Posterior vena cava (tissue), 2 donors: ENCODE measurements at regions of chr2 and their contacts with region 1.

Region 1: GRCh38 chr2:63698825-63699548 is 110.2 kb downstream of the MDH1 start:
- DNase-seq: peak; percentile 91

Region 2: DNA sequence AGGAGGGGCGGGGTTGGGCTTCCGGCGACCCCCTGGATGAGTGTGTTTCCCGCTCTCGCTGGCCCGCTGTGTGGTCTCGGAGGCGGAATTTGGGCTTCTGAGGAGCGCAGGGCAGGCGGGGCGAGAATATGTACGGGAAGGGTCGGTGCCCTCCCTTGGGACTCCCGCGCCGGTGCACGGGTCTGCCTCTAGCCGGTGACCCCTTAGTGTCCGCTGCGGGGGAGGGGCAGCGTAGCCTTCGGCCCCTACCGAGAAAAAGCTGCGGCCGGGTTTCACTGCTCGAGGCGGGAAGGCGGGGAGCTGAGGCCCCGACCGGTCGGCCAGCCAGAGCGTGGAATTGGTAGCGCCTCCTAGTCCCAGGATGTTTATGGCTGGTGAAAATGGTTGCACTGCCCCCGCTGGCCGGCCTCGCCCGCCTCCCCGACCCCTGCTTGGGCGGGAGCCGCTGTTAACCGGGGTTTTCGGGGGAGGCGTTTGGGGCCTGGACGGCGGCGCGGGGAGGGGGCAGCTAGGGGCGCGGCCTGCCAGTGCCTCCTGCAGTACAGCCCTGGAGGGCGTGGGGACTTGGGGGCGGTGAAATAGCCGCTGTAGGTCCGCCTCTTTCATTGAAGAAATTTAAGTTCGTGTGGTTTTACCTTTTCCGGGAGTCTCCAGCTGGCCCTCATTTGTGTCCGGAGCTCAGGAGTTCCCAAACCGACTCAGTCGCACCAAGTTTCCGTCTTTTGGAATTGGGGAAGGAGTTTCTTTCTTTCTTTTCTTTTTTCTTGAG is 142.5 kb after region 1 on chr2 and contains the start of gene UGP2:
- intact Hi-C with region 1: loop called in 1 of 2 experiments (anchors 10 kb)
- DNase-seq: peak; percentile 98
- total RNA-seq, gene UGP2: 204 to 217 TPM